GM12878 (cell line): ENCODE measurements at regions of chr15 and their contacts with region 1.

Region 1: DNA sequence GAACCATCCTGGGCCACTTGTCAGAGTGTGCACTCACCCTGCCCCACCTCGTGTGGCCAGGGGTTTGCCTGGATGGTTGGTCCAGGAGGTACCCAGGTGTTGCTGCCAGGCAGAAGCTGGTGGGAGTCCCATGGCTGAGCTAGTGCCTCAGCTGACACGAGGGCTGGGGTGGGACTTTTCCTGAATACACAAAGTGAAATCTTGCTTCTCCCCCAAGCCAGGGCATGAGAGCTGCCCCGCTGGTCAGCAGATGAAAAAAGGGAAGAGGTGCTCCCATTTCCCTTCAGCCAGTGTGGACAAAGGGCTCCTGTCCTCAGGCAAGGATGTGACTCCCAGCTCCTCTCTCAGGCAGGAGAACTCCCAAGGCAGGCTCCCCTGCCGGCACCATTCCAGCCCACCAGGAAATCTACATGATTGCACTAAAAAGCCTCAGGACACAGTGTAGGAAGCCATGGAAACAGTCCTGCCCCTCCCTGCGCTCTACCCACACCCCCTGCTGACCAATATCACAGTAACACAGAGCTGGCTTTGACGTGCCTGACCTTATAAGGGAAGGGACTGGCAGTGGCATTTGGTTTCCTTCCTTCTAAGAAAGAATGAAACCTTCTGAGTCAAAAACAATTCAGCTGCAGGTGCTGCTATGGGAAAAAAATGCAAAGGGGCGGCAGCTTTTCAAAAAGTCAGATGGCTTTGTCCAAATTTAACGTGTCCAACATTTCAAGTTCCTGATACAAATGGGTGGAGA is 33.9 kb downstream of the MYO5C start:
- DNase-seq: peak; percentile 86
- ATAC-seq: peak; percentile 100
- H3K4me3 ChIP-seq: no peak overlapping the region
- H3K27ac ChIP-seq: peak overlapping the region; percentile 95
- H3K4me1 ChIP-seq: peaks cover 24% of the 10 kb centered on the region
- H3K27me3 ChIP-seq: no peaks in the 10 kb centered on the region
- CTCF ChIP-seq: peak in 2 of 3 experiments; percentile 24 to 25; a peak in 1 of 6 replicates
- EP300 ChIP-seq: 0 out of 4 replicates have a peak, but pooled peaks have one; percentile 31 to 59
- POLR2A ChIP-seq: no peak; the same call in 1 of the 2 replicates
- RAD21 ChIP-seq: no peak

Region 2: DNA sequence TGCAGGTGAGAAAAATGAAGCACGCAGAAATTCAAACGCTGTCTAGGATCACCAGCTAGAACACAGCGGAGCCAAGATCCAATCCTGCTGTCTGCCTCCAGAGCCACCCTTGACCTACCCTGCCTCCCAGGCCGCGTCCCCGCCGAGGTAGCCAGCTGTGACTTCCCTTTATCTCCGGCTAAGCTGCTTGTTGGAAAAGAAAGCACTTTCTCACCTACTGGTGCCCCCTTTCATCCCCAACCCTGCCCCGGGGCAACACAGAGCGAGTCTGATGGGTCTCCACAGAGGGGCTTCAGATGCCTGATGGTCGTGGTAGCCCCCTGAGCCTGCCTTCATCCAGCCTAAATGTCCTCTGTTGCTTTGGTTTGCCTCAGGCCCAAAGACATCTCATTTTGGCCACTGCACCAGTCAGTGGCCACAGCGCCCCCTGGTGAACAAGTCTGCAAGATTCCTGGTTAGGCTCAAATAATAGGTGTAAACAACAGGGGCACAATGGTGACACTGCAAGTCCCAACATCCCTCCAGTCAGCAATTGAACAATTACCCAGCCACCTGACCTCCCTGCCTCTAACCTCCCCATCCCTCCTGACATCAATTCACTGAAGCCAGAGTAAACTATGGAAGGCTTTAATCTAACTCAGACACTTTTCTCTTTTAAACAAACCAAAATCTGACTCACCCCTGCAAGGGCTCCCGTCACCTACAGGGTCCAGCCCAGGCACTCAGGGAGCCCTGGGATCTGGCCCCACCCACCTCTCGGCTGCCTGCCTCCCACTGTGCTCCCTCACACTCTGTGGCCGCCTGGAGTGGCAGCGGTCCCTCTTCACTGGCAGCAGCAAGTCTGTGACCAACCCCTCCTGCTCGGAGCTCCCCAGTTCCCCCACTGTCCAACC is 121.8 kb before region 1 on chr15:
- CTCF ChIA-PET with region 1: no interaction called
- POLR2A ChIA-PET with region 1: no interaction called
- RAD21 ChIA-PET with region 1: no interaction called
- SMC1A ChIA-PET with region 1: no interaction called
- in situ Hi-C with region 1: no loop called
- intact Hi-C with region 1: no loop called
- DNase-seq: peak; percentile 39
- ATAC-seq: peak; percentile 83
- H3K4me3 ChIP-seq: no peak overlapping the region
- H3K27ac ChIP-seq: peak overlapping the region; percentile 66
- H3K4me1 ChIP-seq: peaks cover 35% of the 10 kb centered on the region
- H3K27me3 ChIP-seq: no peaks in the 10 kb centered on the region
- CTCF ChIP-seq: peak; percentile 78 to 91 (median 86)
- EP300 ChIP-seq: no peak
- POLR2A ChIP-seq: no peak
- RAD21 ChIP-seq: peak; percentile 98

Region 3: GRCh38 chr15:52246686-52247431 is 14.8 kb before region 1 on chr15:
- CTCF ChIA-PET with region 1: interaction called, 13 read pairs
- POLR2A ChIA-PET with region 1: interaction called, 4 read pairs
- RAD21 ChIA-PET with region 1: interaction called, 5 read pairs
- SMC1A ChIA-PET with region 1: interaction called, 5 read pairs
- in situ Hi-C with region 1: no loop called
- intact Hi-C with region 1: no loop called
- DNase-seq: no peak
- ATAC-seq: peak; percentile 47
- H3K4me3 ChIP-seq: no peak overlapping the region
- H3K27ac ChIP-seq: no peak overlapping the region
- H3K4me1 ChIP-seq: no peaks in the 10 kb centered on the region
- H3K27me3 ChIP-seq: no peaks in the 10 kb centered on the region
- CTCF ChIP-seq: no peak
- EP300 ChIP-seq: no peak
- POLR2A ChIP-seq: no peak
- RAD21 ChIP-seq: no peak

Region 4: DNA sequence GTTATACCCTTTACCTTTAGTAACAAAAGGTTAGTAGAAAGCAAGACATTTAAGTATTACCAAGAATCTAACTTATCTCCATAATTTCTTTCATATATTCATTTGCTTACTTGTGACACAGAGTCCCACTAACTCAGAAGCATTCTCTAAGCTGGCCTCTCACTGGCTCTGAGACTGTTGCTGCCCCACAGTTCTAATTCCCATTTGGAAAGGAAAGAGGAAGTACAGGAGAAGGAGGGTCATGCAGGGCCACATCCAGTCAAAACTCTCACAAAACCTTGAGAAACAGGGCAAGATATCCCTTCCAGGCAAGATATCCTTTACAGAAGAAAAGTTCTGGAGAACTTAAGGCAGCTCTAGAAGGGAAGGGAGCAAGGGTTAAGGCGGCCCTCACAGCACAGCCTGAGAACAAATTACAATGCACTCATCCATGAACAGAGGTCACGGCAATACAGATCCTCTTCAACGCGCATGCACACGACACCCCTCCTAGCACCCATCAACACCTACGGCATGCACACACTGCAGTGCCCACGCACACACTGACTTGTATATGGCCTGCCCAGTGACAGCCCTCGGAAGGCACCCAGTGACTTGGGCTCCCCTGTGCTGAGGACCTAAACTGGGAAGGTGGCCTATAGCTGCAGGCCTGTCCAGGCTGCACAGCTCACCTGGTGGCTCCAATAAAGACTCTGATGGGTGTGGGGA is 46.9 kb after region 1 on chr15:
- CTCF ChIA-PET with region 1: interaction called, 13 read pairs
- POLR2A ChIA-PET with region 1: no interaction called
- RAD21 ChIA-PET with region 1: interaction called, 3 read pairs
- SMC1A ChIA-PET with region 1: interaction called, 20 read pairs
- in situ Hi-C with region 1: no loop called
- intact Hi-C with region 1: loop called (anchors 5 kb)
- DNase-seq: no peak
- ATAC-seq: peak; percentile 83
- H3K4me3 ChIP-seq: no peak overlapping the region
- H3K27ac ChIP-seq: peak overlapping the region; percentile 83
- H3K4me1 ChIP-seq: peaks cover 15% of the 10 kb centered on the region
- H3K27me3 ChIP-seq: no peaks in the 10 kb centered on the region
- CTCF ChIP-seq: no peak
- EP300 ChIP-seq: no peak
- POLR2A ChIP-seq: no peak
- RAD21 ChIP-seq: no peak